Gastrocnemius medialis (tissue), 4 donors: ENCODE measurements at regions of chr2 and their contacts with region 1.

Region 1: GRCh38 chr2:9813312-9814133 is 29.8 kb upstream of the TAF1B start:
- DNase-seq: peak; percentile 35 to 56
- ATAC-seq: peak; percentile 79 to 82
- H3K4me3 ChIP-seq: peak overlapping the region in 3 of 4 donors; percentile 12 to 46 (median 22)
- H3K27ac ChIP-seq: no peak overlapping the region
- H3K4me1 ChIP-seq: peaks cover 3 to 7% of the 10 kb centered on the region in 2 donors
- H3K27me3 ChIP-seq: no peaks in the 10 kb centered on the region
- CTCF ChIP-seq: peak; percentile 82 to 93 (median 90)
- POLR2A ChIP-seq: no peak

Region 2: DNA sequence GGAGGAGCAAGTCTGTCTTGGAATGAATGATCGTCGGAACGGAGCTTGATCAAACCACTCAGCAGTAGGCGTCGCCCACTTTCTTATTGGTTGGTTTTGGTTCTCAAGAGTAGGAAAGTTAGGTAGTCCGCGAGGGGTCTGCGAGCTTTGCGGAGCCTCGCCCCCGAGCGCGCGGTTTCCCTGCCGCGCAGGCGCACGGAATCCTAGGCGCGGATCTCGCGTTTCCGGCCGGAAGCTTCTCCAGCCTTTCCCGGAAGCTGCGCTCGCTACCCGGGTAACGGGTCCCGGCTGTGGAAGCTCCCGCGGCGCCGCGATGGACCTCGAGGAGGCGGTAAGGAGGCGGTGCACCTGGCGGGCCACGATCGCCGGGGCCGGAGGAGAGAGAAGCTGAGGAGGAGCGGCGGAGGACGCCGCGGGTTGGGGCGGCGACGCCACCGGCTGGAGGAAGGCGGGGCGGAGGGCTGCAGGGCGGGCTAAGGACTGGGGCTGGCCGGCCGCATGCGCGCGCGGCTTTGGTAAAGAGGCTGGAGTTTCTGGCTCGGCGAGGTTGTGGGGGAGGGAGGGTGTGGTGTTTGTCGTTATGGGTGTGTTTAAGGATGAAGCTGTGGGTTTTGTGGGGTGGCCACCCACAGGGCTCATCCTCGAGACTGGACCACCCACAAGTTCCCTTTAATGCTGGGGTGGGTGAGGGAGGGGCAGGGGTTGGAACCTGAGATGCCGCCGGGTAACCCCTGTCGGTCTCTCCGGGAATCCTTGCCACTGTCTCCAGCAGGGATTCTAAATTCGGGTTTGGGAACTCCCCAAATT is 29.9 kb after region 1 on chr2 and contains the start of gene TAF1B:
- in situ Hi-C with region 1: no loop called
- intact Hi-C with region 1: loop called (anchors 1 kb)
- DNase-seq: peak; percentile 61 to 81
- ATAC-seq: peak; percentile 93 to 94
- H3K4me3 ChIP-seq: peak within 1 kb of the TSS; percentile 74 to 97 (median 90)
- H3K27ac ChIP-seq: peak within 1 kb of the TSS; percentile 80 to 95 (median 88)
- H3K4me1 ChIP-seq: peaks cover 17 to 22% of the 10 kb centered on the region in 2 donors
- H3K27me3 ChIP-seq: no peaks in the 10 kb centered on the region
- CTCF ChIP-seq: peak in 1 of 5 experiments; percentile 25
- POLR2A ChIP-seq: peak; percentile 66 to 75
- total RNA-seq, gene TAF1B: 5.0 to 8.4 (median 7.3) TPM

Region 3: GRCh38 chr2:9877733-9878125 is 64.2 kb after region 1 on chr2:
- in situ Hi-C with region 1: no loop called
- intact Hi-C with region 1: no loop called
- DNase-seq: no peak
- ATAC-seq: no peak
- H3K4me3 ChIP-seq: no peak overlapping the region
- H3K27ac ChIP-seq: no peak overlapping the region
- H3K4me1 ChIP-seq: no peaks in the 10 kb centered on the region
- H3K27me3 ChIP-seq: no peaks in the 10 kb centered on the region
- CTCF ChIP-seq: no peak
- POLR2A ChIP-seq: no peak

Region 4: DNA sequence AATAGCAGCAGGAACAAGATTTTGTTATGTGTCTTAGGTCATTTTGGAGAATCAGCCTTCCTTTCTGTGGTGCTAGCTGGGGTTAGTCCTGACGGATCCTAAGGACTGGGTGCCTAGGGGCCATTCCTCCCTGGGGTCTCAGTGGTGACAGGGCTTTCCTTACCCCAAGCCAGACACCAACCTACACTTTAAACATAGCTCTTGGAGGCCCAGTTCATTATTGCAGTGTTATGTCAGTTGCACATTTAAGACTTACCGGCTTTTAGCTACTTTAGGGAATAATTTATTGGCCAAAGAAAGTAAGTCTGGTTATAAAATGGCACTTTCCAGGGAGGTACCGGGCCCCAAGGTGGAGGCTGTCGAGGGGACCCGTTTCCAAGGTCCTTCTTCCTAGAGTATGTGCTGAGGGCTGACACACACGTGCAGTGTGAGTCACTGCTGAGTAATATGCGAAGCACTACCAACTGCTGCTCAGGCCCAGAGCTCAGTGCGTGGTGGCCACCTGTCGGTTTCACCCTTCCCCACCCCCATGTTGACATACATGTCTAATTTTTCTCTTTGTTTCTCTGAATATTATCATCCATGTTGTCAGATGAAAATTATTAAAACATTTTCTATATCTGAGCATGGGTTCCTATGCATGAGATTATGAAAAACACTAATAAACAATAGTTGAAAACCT is 101.0 kb after region 1 on chr2:
- in situ Hi-C with region 1: no loop called
- intact Hi-C with region 1: loop called (anchors 5 kb)
- DNase-seq: peak; percentile 11 to 44
- ATAC-seq: peak; percentile 75 to 80
- H3K4me3 ChIP-seq: no peak overlapping the region
- H3K27ac ChIP-seq: no peak overlapping the region
- H3K4me1 ChIP-seq: peaks cover 0 to 6% of the 10 kb centered on the region in 2 donors
- H3K27me3 ChIP-seq: no peaks in the 10 kb centered on the region
- CTCF ChIP-seq: no peak
- POLR2A ChIP-seq: no peak

Region 5: GRCh38 chr2:10097352-10098148 is 284.0 kb after region 1 on chr2:
- in situ Hi-C with region 1: no loop called
- intact Hi-C with region 1: loop called (anchors 2 kb)
- DNase-seq: peak; percentile 30 to 39
- ATAC-seq: peak; percentile 66 to 80
- H3K4me3 ChIP-seq: no peak overlapping the region
- H3K27ac ChIP-seq: no peak overlapping the region
- H3K4me1 ChIP-seq: peaks cover 0 to 6% of the 10 kb centered on the region in 2 donors
- H3K27me3 ChIP-seq: no peaks in the 10 kb centered on the region
- CTCF ChIP-seq: peak; percentile 66 to 91 (median 79)
- POLR2A ChIP-seq: no peak

Region 6: DNA sequence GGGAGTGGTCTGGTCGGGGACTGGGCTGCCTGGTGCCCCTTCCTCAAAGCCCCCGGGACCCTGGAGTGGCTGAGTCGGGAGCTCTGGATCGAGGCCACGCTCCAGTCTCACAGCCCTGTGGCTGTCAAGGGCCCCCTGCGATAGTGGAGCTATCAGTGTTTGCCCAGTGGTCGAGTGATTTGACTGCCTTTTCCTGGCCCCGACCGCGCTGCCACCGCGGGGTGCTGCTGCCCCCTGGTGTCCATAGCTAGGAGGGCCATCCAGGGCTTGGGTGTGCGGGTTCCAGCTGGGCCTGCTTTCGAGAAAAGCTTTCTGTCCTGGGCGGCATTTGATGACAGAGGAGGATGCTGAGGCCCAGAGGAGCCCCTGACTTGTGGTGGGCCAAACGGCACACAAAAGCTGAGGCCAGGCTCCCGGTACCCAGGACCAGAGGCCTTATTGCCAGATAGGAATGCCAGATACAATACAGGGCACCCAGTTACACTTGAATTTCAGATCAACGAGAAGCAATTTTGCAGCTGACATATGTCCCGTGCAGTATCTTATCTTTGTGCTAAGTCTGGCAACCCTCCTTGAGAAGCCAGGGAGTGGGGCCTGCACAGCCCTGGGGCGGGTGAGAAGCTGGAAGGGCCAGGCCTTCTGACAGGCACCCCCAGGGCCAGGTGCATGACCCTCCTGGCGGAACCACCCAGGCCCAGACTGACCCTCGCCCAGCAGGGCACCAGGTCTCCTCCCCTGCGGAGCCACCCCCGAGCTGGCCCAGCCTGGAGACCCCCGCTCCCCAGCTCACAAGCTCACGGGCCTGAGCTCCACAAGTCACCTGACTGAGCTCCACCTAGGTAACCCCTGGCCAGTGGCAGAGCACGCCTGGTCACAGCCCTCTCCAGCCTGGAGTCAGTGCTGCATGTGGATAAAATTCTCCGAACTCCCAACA is 621.6 kb after region 1 on chr2:
- in situ Hi-C with region 1: no loop called
- intact Hi-C with region 1: loop called (anchors 5 kb)
- DNase-seq: peak; percentile 29 to 50
- ATAC-seq: peak; percentile 49 to 65
- H3K4me3 ChIP-seq: no peak overlapping the region
- H3K27ac ChIP-seq: no peak overlapping the region
- H3K4me1 ChIP-seq: peaks cover 9 to 13% of the 10 kb centered on the region in 2 donors
- H3K27me3 ChIP-seq: peaks cover 0 to 13% (median 0%) of the 10 kb centered on the region in 3 donors
- CTCF ChIP-seq: peak; percentile 80 to 98 (median 93)
- POLR2A ChIP-seq: no peak